CD4-positive, alpha-beta memory T cell (primary cell): ENCODE measurements at regions of chr14 and their contacts with region 1.

Region 1: DNA sequence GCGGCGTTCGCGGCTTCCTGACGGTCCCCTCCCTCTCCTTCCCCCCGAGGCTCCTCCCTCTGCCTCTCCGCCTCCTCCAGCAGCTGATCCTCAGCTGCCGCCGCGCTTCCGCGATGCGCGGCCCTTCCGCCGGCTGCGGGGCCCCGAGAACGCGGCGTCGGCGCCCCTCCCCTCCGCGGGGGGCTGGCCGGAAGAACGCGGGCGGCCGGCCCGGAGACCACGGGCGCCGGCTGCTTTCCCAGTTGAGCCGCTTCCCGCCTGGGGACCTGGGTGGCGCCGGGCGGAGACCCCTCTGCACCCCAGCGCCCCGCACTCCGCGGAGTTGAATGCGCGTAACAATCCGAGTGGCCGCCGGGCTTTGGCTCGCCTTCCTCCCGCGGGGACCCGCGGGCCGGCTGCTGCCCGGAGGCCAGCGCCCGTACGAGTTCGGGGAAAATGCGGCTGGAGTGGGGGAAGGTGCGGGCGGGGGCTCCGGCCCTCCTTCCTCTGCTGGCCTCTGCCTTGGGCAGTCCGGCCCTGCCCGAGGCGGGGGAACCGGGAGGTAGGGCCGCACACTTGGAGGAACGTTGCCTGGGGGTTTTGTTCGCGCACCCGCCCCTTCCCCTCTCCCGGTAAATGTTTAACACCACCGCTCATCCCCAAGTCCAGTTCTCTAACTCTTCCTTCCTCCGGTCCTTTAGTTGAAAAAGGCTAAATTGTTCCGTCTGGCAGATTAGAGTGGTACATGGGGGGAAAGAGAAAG is 383 bp upstream of the DCAF5 start:
- DNase-seq: peak; percentile 89 to 97 (median 94)
- H3K4me3 ChIP-seq: peak overlapping the region; percentile 32 to 94
- H3K4me3 Mint-ChIP-seq: peak overlapping the region; percentile 94 to 100 (median 97)
- H3K27ac ChIP-seq: peak overlapping the region; percentile 75
- H3K27ac Mint-ChIP-seq: peak overlapping the region; percentile 91 to 97 (median 93)
- H3K4me1 ChIP-seq: peaks cover 38% of the 10 kb centered on the region
- H3K4me1 Mint-ChIP-seq: peaks cover 22 to 45% (median 32%) of the 10 kb centered on the region in 4 donors
- H3K27me3 ChIP-seq: no peaks in the 10 kb centered on the region
- H3K27me3 Mint-ChIP-seq: peaks cover 0 to 2% of the 10 kb centered on the region in 2 donors

Region 2: DNA sequence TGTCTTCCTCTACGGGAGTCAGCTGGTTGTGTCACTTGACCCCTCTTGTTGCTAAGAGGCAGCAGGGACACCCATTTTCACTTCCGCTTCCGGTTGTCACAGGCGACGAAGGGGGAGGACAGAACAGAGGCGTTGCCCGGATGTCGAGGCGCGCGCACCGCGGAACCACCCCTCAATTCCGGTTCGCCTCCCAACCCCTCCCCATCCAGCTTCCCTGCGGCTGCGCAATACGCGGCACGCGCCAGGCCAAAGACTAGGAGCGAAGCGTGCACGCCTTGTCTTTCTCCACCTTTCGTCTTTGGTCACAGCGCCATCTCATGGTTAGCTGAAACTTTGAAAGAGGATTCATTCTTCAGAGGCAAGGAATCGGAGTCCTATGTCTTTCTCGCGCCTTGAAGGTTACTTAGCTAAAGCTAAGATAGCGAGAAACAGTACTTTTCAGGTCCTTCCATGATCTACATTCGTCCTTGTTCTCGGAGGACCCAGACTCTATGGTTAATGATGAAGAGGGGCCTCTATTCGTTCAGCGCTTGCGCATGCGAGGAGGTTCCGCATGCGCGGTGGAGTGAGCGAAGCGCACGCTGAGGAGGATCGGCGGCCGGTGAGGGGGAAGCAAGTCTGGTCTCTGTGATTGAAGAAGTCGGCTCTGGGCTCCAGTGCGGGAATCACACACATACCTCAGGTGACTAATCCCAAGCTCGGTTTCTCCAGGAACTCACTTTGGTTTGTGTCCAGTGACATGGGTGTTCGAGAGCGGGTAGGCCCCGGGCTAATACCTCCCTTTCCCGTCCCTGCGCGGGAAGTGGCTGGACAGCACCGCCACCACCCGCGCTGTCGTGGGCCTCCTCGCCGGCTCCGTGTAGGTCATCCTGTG is 1793.3 kb before region 1 on chr14 and contains the starts of genes ATP6V1D and EIF2S1:
- CTCF ChIA-PET with region 1: no interaction called
- POLR2A ChIA-PET with region 1: no interaction called
- intact Hi-C with region 1: loop called (anchors 2 kb)
- DNase-seq: peak; percentile 99 to 100 (median 100)
- H3K4me3 ChIP-seq: peak within 1 kb of the TSS; percentile 88 to 97
- H3K4me3 Mint-ChIP-seq: peak within 1 kb of the TSS; percentile 96 to 100 (median 100)
- H3K27ac ChIP-seq: peak within 1 kb of the TSS; percentile 90
- H3K27ac Mint-ChIP-seq: peak within 1 kb of the TSS; percentile 92 to 100 (median 99)
- H3K4me1 ChIP-seq: peaks cover 72% of the 10 kb centered on the region
- H3K4me1 Mint-ChIP-seq: peaks cover 44 to 93% (median 70%) of the 10 kb centered on the region in 4 donors
- H3K27me3 ChIP-seq: no peaks in the 10 kb centered on the region
- H3K27me3 Mint-ChIP-seq: no peaks in the 10 kb centered on the region
- total RNA-seq, gene ATP6V1D: 26.8 to 35.0 TPM
- total RNA-seq, gene EIF2S1: 62.0 to 72.1 TPM

Region 3: GRCh38 chr14:69191340-69192111 is 38.2 kb after region 1 on chr14 and contains the start of gene EXD2:
- CTCF ChIA-PET with region 1: interaction called, 19 read pairs
- POLR2A ChIA-PET with region 1: interaction called, 78 read pairs
- intact Hi-C with region 1: loop called (anchors 1 kb)
- DNase-seq: peak; percentile 48 to 74 (median 65)
- H3K4me3 ChIP-seq: peak within 1 kb of the TSS; percentile 55 to 84
- H3K4me3 Mint-ChIP-seq: peak within 1 kb of the TSS; percentile 91 to 97 (median 94)
- H3K27ac ChIP-seq: peak within 1 kb of the TSS; percentile 50
- H3K27ac Mint-ChIP-seq: peak within 1 kb of the TSS; percentile 82 to 94 (median 92)
- H3K4me1 ChIP-seq: peaks cover 10% of the 10 kb centered on the region
- H3K4me1 Mint-ChIP-seq: peaks cover 15 to 26% (median 23%) of the 10 kb centered on the region in 4 donors
- H3K27me3 ChIP-seq: no peaks in the 10 kb centered on the region
- H3K27me3 Mint-ChIP-seq: no peaks in the 10 kb centered on the region
- total RNA-seq, gene EXD2: 14.3 to 15.7 TPM

Region 4: DNA sequence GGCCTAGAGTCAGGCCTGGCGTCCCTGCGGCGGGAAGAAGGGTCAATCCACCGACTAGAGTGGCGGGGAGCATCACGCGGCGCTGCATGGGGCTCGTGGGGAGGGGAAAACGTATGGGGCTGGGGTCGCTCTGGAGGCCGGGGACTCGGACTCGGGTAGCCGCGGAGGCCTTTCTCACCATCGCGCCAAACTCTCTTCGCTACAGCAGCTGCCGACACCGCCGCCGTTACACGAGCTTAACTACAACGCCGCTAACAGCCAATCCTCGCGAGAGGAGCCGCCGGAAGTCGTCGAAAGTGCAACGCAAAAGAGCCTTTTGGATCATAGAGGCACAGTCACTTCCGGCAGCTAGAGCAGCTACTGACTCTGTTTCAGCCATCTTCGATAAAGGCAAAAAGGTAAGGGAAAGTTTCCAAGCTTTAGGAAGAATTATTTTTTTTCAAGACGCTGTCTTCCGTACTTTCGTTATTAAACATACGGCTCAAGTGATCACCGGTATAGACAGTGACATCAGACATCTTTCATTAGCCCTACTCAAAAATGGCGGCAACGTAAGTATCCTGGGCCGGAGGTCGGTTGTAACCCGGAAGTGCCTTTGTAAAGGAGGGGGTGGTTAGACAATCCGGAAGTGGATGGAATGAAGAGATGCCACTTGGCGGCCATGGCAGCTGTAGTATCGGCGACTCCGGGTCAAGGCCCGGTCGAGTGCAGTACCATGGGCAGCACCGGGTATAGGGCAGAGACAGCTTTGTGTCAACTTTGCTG is 244.9 kb after region 1 on chr14 and contains the starts of genes ERH and SLC39A9:
- CTCF ChIA-PET with region 1: no interaction called
- POLR2A ChIA-PET with region 1: interaction called, 18 read pairs
- intact Hi-C with region 1: loop called (anchors 1 kb)
- DNase-seq: peak; percentile 96 to 98 (median 96)
- H3K4me3 ChIP-seq: peak within 1 kb of the TSS; percentile 86 to 91
- H3K4me3 Mint-ChIP-seq: peak within 1 kb of the TSS; percentile 91 to 99 (median 96)
- H3K27ac ChIP-seq: peak within 1 kb of the TSS; percentile 87
- H3K27ac Mint-ChIP-seq: peak within 1 kb of the TSS; percentile 98 to 100 (median 100)
- H3K4me1 ChIP-seq: peaks cover 81% of the 10 kb centered on the region
- H3K4me1 Mint-ChIP-seq: peaks cover 41 to 89% (median 59%) of the 10 kb centered on the region in 4 donors
- H3K27me3 ChIP-seq: no peaks in the 10 kb centered on the region
- H3K27me3 Mint-ChIP-seq: no peaks in the 10 kb centered on the region
- total RNA-seq, gene ERH: 118 to 135 TPM
- total RNA-seq, gene SLC39A9: 33.7 to 38.6 TPM

Region 5: DNA sequence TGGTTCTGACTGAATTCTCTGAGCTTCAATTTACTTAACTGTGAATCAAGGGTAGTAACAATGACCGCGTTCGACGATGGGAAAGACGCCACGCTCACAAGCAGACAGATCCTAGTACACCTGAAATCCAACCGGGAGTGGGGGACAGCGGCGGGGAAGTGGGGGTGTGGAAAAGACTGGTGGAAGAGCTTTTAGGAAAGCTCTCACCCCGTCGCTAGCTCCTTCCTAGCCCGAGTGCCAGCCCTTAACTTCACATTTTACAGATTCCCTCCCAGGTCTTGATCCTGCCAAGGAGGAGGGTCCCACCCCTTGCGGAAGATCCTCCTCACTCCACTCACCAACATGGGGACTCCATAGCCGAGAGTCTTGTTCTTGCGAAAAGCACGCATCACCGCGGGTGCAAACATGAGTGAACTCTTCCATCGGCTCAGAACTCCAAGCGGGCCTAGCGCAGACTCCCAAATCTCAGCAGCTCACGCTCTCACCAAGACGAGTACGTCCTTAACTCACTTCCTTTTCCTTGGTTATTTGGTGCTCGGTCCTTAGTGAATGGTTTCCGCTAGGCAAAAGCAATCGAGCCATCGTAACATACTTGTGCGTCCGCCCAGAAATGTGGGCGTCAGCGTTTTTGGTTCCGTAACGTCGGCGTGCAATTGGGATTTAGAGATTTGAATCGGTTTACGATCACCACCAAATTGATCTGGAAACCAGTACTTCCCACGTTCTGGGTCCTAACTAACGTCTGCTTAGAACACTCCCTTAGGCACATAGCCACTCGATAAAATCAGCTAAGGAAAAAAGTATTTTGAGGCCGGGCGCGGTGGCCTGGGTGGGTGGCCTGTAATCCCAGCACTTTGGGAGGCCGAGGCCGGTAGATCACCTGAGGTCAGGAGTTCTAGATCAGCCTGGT is 1206.1 kb after region 1 on chr14 and contains the start of gene COX16:
- CTCF ChIA-PET with region 1: no interaction called
- POLR2A ChIA-PET with region 1: interaction called, 7 read pairs
- intact Hi-C with region 1: loop called (anchors 1 kb)
- DNase-seq: peak; percentile 76 to 88 (median 82)
- H3K4me3 ChIP-seq: peak within 1 kb of the TSS; percentile 70 to 95
- H3K4me3 Mint-ChIP-seq: peak within 1 kb of the TSS; percentile 96 to 100 (median 100)
- H3K27ac ChIP-seq: peak within 1 kb of the TSS; percentile 62
- H3K27ac Mint-ChIP-seq: peak within 1 kb of the TSS; percentile 84 to 98 (median 97)
- H3K4me1 ChIP-seq: peaks cover 40% of the 10 kb centered on the region
- H3K4me1 Mint-ChIP-seq: peaks cover 35 to 53% (median 45%) of the 10 kb centered on the region in 4 donors
- H3K27me3 ChIP-seq: no peaks in the 10 kb centered on the region
- H3K27me3 Mint-ChIP-seq: no peaks in the 10 kb centered on the region
- total RNA-seq, gene COX16: 24.5 to 26.2 TPM